ENCODE measurements at regions of chr2 and their contacts with region 1.

Region 1: DNA sequence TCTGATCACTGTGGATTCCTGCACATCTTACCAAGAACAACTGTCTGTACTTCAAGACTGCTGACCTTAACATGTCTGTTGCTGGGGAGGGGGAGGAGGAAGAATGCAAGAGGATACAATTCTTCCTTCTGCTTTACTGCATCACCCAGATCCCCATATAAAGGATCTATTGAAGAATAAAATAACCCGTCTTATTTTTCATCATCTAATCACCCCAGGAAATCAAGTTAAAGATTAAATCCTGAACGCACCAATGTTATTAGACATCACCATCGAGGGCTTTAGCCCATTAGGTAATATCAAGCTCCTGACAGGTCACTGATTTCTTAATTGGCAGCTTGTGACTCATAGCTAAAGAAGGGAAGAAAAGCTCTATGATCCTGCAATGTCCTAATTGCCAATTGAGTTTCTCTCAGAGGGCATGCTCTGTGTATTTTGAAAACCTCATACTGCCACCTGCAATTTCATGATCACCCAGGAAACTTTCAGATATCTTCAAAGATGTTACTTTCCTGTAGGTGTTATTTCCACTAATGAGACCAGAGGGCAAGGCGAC is 75.4 kb upstream of the KCNE4 start:
- DNase-seq: no peak
- ATAC-seq: no peak
- H3K4me3 ChIP-seq: no peak overlapping the region
- H3K4me3 Mint-ChIP-seq: no peak overlapping the region
- H3K27ac ChIP-seq: no peak overlapping the region
- H3K27ac Mint-ChIP-seq: no peak overlapping the region
- H3K4me1 ChIP-seq: no peaks in the 10 kb centered on the region
- H3K4me1 Mint-ChIP-seq: no peaks in the 10 kb centered on the region
- H3K27me3 ChIP-seq: no peaks in the 10 kb centered on the region
- H3K27me3 Mint-ChIP-seq: peaks cover 12 to 37% (median 15%) of the 10 kb centered on the region in 5 donors

Region 2: GRCh38 chr2:222949073-222949472 is 27.5 kb before region 1 on chr2:
- CTCF ChIA-PET with region 1: no interaction called
- POLR2A ChIA-PET with region 1: no interaction called
- intact Hi-C with region 1: loop called in 1 of 2 experiments (anchors 1 kb)
- DNase-seq: no peak
- ATAC-seq: no peak
- H3K4me3 ChIP-seq: no peak overlapping the region
- H3K4me3 Mint-ChIP-seq: no peak overlapping the region
- H3K27ac ChIP-seq: no peak overlapping the region
- H3K27ac Mint-ChIP-seq: no peak overlapping the region
- H3K4me1 ChIP-seq: no peaks in the 10 kb centered on the region
- H3K4me1 Mint-ChIP-seq: no peaks in the 10 kb centered on the region
- H3K27me3 ChIP-seq: no peaks in the 10 kb centered on the region
- H3K27me3 Mint-ChIP-seq: peaks cover 6 to 20% (median 9%) of the 10 kb centered on the region in 5 donors

Region 3: GRCh38 chr2:222959336-222959735 is 17.3 kb before region 1 on chr2:
- CTCF ChIA-PET with region 1: no interaction called
- POLR2A ChIA-PET with region 1: no interaction called
- intact Hi-C with region 1: no loop called
- DNase-seq: no peak
- ATAC-seq: no peak
- H3K4me3 ChIP-seq: no peak overlapping the region
- H3K4me3 Mint-ChIP-seq: no peak overlapping the region
- H3K27ac ChIP-seq: no peak overlapping the region
- H3K27ac Mint-ChIP-seq: no peak overlapping the region
- H3K4me1 ChIP-seq: no peaks in the 10 kb centered on the region
- H3K4me1 Mint-ChIP-seq: no peaks in the 10 kb centered on the region
- H3K27me3 ChIP-seq: no peaks in the 10 kb centered on the region
- H3K27me3 Mint-ChIP-seq: peaks cover 18 to 33% (median 31%) of the 10 kb centered on the region in 5 donors

Region 4: DNA sequence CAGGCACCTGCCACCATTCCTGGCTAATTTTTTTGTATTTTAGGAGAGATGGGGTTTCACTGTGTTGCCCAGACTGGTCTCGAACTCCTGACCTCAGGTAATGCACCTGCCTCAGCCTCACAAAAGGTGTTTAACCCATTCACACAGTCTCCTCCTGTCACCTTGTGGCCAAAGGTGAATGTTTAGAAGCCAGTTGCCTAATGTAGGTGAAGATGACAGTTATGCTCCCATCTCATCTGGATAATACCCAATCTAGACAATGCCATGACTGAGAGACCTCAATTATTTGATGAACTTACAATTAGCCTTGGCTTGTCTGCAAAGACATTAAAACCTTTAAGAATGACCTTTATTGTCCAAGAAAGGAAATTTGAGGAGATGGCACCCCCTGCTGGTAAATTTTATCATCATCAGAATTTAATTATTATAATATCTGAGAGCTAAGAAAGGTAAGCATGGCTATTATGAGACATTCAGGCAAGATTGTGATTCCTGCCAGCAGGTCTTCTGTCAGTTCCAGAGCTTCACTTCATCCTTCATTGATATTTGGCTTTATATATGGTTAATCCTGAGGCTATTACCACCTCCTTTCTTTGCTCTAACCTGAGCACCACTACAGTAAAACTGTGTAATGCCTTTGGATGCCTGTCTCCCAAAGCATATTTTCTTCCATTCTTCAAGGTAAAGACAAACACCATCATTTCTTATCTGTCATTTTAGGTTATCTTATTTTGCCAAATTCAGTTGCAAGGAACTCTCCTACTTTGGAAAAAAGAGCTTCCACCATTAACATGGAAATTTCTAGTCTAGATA is 1307.7 kb after region 1 on chr2:
- CTCF ChIA-PET with region 1: no interaction called
- POLR2A ChIA-PET with region 1: no interaction called
- intact Hi-C with region 1: loop called in 1 of 2 experiments (anchors 5 kb)
- DNase-seq: peak in 6 of 9 donors; percentile 8 to 46 (median 42)
- ATAC-seq: peak; percentile 29
- H3K4me3 ChIP-seq: no peak overlapping the region
- H3K4me3 Mint-ChIP-seq: no peak overlapping the region
- H3K27ac ChIP-seq: no peak overlapping the region
- H3K27ac Mint-ChIP-seq: no peak overlapping the region
- H3K4me1 ChIP-seq: no peaks in the 10 kb centered on the region
- H3K4me1 Mint-ChIP-seq: no peaks in the 10 kb centered on the region
- H3K27me3 ChIP-seq: no peaks in the 10 kb centered on the region
- H3K27me3 Mint-ChIP-seq: peaks cover 32 to 39% (median 37%) of the 10 kb centered on the region in 5 donors

Region 5: GRCh38 chr2:224369028-224369632 is 1392.5 kb after region 1 on chr2:
- CTCF ChIA-PET with region 1: no interaction called
- POLR2A ChIA-PET with region 1: no interaction called
- intact Hi-C with region 1: loop called in 1 of 2 experiments (anchors 5 kb)
- DNase-seq: peak in 7 of 9 donors; percentile 7 to 38 (median 25)
- ATAC-seq: peak; percentile 61
- H3K4me3 ChIP-seq: no peak overlapping the region
- H3K4me3 Mint-ChIP-seq: no peak overlapping the region
- H3K27ac ChIP-seq: no peak overlapping the region
- H3K27ac Mint-ChIP-seq: no peak overlapping the region
- H3K4me1 ChIP-seq: no peaks in the 10 kb centered on the region
- H3K4me1 Mint-ChIP-seq: peaks cover 0 to 4% (median 0%) of the 10 kb centered on the region in 7 donors
- H3K27me3 ChIP-seq: peaks cover 0 to under 1% of the 10 kb centered on the region in 2 donors
- H3K27me3 Mint-ChIP-seq: peaks cover 0 to 8% (median 3%) of the 10 kb centered on the region in 5 donors